ENCODE measurements at regions of chrX and their contacts with region 1.

Region 1: DNA sequence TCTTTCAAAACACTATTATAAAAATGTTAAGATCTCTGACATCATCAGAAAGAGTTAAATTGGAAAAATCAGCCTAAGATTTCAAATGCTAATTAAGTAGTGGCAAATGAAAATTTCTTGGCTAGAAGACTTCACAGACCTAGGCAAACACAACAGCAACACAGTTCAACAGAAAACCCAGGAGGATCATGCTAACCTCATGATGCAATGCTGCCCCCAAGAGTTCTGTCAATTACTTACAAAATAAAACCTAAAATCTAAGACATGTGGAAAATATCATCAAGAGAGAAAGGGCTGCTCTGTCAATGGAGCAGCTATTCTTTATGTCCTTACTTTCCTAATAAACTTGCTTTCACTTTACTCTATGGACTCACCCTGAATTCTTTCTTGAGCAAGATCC is 21.0 kb downstream of the S100G start:
- DNase-seq: no peak
- ATAC-seq: no peak
- H3K4me3 ChIP-seq: no peak overlapping the region
- H3K27ac ChIP-seq: no peak overlapping the region
- H3K4me1 ChIP-seq: no peaks in the 10 kb centered on the region
- H3K27me3 ChIP-seq: peaks cover 0 to 32% (median 0%) of the 10 kb centered on the region in 7 donors
- CTCF ChIP-seq: peak in 7 of 9 donors; percentile 14 to 48 (median 40)

Region 2: GRCh38 chrX:16123222-16123786 is 547.7 kb before region 1 on chrX and contains the start of gene GRPR:
- intact Hi-C with region 1: loop called in 7 of 10 experiments (anchors 5 to 10 kb)
- DNase-seq: peak; percentile 52 to 64
- ATAC-seq: peak; percentile 70 to 93 (median 80)
- H3K4me3 ChIP-seq: no peak within 1 kb of the TSS
- H3K27ac ChIP-seq: no peak within 1 kb of the TSS
- H3K4me1 ChIP-seq: peaks cover 0 to 3% (median 0%) of the 10 kb centered on the region in 9 donors
- H3K27me3 ChIP-seq: peaks cover 0 to 62% (median 0%) of the 10 kb centered on the region in 7 donors
- CTCF ChIP-seq: peak; percentile 39 to 85 (median 64)
- total RNA-seq, gene GRPR: 0.15 to 0.57 (median 0.30) TPM

Region 3: DNA sequence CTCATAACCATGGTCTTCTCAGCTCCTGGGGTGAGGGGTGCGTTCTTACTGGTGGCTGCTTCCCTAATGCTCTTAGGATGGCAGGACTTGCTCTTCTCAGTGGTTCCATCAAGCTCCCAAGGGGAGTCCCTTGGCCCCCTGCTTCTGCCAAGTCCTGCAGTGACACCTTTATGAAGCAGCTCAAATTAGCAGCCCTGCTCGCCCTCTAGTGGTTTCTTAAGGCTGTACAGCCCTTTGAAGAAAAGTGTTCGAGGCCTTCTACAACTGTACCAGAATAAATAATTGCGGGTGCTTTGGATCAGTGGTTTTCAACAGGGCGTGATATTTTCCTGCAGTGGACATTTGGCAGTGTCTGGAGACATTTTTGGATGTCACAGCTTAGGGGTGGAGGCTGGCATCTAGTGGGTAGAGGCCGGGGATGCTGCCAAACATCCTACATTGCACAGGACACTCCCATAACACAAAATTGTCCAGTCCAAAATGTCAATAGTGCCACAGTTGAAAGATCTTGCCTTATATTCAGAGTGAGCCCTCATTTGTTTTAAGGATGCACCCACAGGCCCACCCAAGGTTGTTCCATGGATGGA is 225.7 kb before region 1 on chrX:
- intact Hi-C with region 1: loop called in 2 of 10 experiments (anchors 5 to 10 kb)
- DNase-seq: no peak
- ATAC-seq: peak in 1 of 8 donors; percentile 37
- H3K4me3 ChIP-seq: no peak overlapping the region
- H3K27ac ChIP-seq: no peak overlapping the region
- H3K4me1 ChIP-seq: no peaks in the 10 kb centered on the region
- H3K27me3 ChIP-seq: peaks cover 0 to 23% (median 0%) of the 10 kb centered on the region in 7 donors
- CTCF ChIP-seq: peak; percentile 26 to 76 (median 50)

Region 4: DNA sequence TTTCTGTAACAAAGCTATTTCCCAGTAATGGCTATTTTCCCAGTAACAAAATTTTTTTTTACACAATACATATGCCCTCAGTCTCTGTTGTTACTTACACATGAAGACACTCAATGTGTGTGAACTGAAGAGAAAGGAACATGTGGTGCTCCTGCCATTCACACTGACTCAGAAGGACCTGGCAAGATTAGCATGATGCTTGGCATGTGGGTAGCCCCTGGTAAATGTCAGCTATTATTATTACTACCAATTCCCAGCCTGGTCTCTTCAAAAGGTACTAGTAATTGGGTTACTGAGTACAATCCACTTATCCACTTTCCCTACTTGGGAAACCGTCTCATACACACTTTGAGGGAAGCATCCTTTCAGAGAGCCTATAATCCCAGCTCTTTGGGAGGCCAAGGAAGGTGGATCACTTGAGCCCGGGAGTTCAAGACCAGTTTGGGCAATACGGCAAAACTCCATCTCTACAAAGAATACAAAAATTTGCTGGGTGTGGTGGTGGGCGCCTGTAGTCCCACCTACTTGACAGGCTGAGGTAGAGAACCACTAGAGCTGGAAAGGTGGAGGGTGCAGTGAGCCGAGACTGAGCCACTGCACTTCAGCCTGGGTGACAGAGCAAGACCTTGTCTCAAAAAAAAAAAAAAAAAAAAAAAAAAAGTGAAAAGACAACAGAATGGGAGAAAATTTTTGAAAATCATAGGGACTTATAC is 184.5 kb after region 1 on chrX:
- intact Hi-C with region 1: no loop called
- DNase-seq: no peak
- ATAC-seq: peak in 3 of 8 donors; percentile 53 to 81 (median 73)
- H3K4me3 ChIP-seq: no peak overlapping the region
- H3K27ac ChIP-seq: no peak overlapping the region
- H3K4me1 ChIP-seq: peaks cover 0 to 10% (median 0%) of the 10 kb centered on the region in 9 donors
- H3K27me3 ChIP-seq: peaks cover 0 to 61% (median 0%) of the 10 kb centered on the region in 7 donors
- CTCF ChIP-seq: no peak

Region 5: DNA sequence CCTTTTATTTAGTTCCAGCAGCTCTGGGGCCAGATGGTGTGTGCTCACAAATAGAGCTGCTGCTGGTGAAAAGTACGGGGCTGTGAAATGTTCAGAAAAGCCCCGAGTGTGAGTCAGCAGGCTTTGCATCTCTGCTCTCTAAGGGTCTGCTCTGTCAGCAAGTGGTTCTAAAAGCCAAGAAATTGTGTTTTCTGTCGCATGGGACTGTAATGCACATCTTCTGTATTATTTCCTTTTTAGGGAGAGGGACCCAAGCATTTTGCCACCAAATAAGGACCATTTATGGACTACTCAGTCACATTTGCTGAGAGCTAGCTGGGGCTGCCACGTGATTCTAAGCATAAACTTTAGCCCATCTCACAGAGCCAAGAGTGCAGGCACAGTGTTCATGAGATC is 621.1 kb after region 1 on chrX:
- intact Hi-C with region 1: no loop called
- DNase-seq: no peak
- ATAC-seq: no peak
- H3K4me3 ChIP-seq: no peak overlapping the region
- H3K27ac ChIP-seq: no peak overlapping the region
- H3K4me1 ChIP-seq: no peaks in the 10 kb centered on the region
- H3K27me3 ChIP-seq: peaks cover 0 to 6% (median 0%) of the 10 kb centered on the region in 7 donors
- CTCF ChIP-seq: no peak